A549 (cell line): ENCODE measurements at regions of chr9 and their contacts with region 1.

Region 1: GRCh38 chr9:20622330-20623020 is at the start of gene MLLT3:
- DNase-seq: peak; percentile 96
- ATAC-seq: peak; percentile 79 to 90
- H3K4me3 ChIP-seq: peak within 1 kb of the TSS; percentile 95
- H3K27ac ChIP-seq: peak within 1 kb of the TSS; percentile 90 to 96
- H3K4me1 ChIP-seq: peaks cover 24% of the 10 kb centered on the region
- CTCF ChIP-seq: no peak
- EP300 ChIP-seq: no peak
- POLR2A ChIP-seq: peak; percentile 27; the same call in 1 of the 2 replicates
- RAD21 ChIP-seq: peak in 1 of 2 experiments; percentile 1; a peak in 2 of 5 replicates
- polyA plus RNA-seq, gene MLLT3: 47.6 and 50.8 TPM in 2 replicates

Region 2: GRCh38 chr9:20256284-20256948 is 366.1 kb before region 1 on chr9:
- CTCF ChIA-PET with region 1: no interaction called
- POLR2A ChIA-PET with region 1: no interaction called
- DNase-seq: no peak
- ATAC-seq: no peak
- H3K4me3 ChIP-seq: no peak overlapping the region
- H3K27ac ChIP-seq: no peak overlapping the region
- H3K4me1 ChIP-seq: no peaks in the 10 kb centered on the region
- CTCF ChIP-seq: no peak
- EP300 ChIP-seq: no peak
- POLR2A ChIP-seq: no peak
- RAD21 ChIP-seq: no peak

Region 3: GRCh38 chr9:20280330-20280729 is 342.1 kb before region 1 on chr9:
- CTCF ChIA-PET with region 1: no interaction called
- POLR2A ChIA-PET with region 1: no interaction called
- DNase-seq: no peak
- ATAC-seq: 0 out of 6 replicates have a peak, but pooled peaks of 1 of the 2 experiments have one; percentile 24
- H3K4me3 ChIP-seq: no peak overlapping the region
- H3K27ac ChIP-seq: no peak overlapping the region
- H3K4me1 ChIP-seq: no peaks in the 10 kb centered on the region
- CTCF ChIP-seq: no peak
- EP300 ChIP-seq: no peak
- POLR2A ChIP-seq: no peak
- RAD21 ChIP-seq: no peak

Region 4: GRCh38 chr9:20312732-20313131 is 309.7 kb before region 1 on chr9:
- CTCF ChIA-PET with region 1: no interaction called
- POLR2A ChIA-PET with region 1: no interaction called
- DNase-seq: peak; percentile 23 to 24
- ATAC-seq: no peak; a peak in 1 of 6 replicates
- H3K4me3 ChIP-seq: no peak overlapping the region
- H3K27ac ChIP-seq: no peak overlapping the region
- H3K4me1 ChIP-seq: no peaks in the 10 kb centered on the region
- CTCF ChIP-seq: no peak
- EP300 ChIP-seq: no peak
- POLR2A ChIP-seq: no peak
- RAD21 ChIP-seq: no peak

Region 5: DNA sequence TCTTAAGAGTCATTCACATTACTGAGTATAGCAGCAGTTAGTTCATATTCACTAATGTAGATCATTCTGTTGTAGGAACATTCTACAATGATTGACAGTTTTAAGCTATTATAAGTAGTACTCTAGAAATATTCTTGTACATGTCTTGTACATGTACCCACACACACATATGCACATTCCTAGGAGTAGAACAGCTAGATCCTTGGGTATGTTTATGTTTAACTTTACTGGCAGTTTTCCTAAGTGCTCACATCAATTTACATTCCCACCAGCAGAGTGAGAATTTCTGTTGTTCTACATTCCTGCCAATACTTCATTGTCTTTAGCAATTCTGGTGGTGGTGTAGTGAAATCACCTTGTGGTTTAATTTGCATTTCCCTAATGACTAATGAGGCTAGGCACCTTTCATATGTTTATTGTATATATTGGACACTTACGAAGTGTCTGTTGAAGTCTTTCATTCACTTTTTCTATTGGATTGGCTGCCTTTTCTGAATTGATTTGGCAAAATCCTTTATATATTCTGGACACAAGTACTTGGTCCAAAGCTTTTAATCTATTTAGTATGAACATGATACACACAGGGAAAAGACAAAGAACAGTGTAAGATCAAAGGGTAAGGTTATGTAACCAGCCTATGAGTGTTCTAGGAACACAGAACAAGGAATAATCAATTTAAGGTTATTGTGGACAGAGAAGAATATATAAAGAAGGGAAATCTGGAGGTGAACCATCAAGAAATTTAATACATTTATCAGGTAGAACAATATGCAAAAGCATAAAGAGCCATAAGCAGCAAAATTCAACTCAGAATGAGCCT is 95.8 kb before region 1 on chr9:
- CTCF ChIA-PET with region 1: no interaction called
- POLR2A ChIA-PET with region 1: no interaction called
- DNase-seq: no peak
- ATAC-seq: peak; percentile 39 to 64; a peak in 4 of 6 replicates
- H3K4me3 ChIP-seq: no peak overlapping the region
- H3K27ac ChIP-seq: no peak overlapping the region; a peak in 1 of 6 replicates
- H3K4me1 ChIP-seq: peaks cover 14% of the 10 kb centered on the region
- CTCF ChIP-seq: no peak
- EP300 ChIP-seq: no peak
- POLR2A ChIP-seq: no peak
- RAD21 ChIP-seq: no peak

Region 6: DNA sequence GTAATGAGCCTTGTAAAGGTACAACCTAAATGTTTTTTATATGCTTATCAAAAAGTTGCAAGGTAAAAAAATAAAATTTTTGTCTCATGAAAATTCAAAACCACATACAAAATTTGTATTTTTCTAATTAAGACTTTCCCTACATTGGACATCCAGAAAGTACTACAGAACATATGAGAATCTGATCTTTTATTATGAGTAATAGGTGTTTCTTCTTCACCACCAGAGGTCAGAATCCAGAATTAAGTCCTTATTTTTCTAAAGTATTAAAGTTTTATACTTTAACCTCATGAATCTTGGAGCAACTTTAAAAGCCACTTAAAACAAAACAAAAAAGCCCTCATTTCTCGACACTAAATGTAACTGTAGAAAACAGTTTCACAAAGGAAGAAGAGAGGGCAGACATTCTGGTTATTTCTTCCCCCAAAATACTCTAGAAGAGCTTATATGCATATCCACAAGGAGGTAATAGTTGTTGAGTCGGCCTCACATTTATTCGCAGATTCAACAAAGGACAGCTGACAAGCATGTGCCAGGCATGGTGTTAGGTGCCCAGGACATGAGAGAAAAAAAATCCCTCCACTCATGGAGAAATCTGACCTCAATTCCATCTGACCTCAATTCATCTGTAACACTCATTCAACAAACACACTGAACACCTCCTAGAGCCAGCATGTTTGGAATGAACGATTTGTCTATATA is 69.5 kb before region 1 on chr9:
- CTCF ChIA-PET with region 1: interaction called, 12 read pairs
- POLR2A ChIA-PET with region 1: interaction called, 6 read pairs
- DNase-seq: peak in 1 of 2 experiments; percentile 65
- ATAC-seq: peak; percentile 57 to 61; a peak in 4 of 6 replicates
- H3K4me3 ChIP-seq: peak overlapping the region; percentile 8; the same call in 1 of the 3 replicates
- H3K27ac ChIP-seq: peak overlapping the region; percentile 69 to 74
- H3K4me1 ChIP-seq: peaks cover 67% of the 10 kb centered on the region
- CTCF ChIP-seq: peak; percentile 53
- EP300 ChIP-seq: no peak
- POLR2A ChIP-seq: no peak
- RAD21 ChIP-seq: peak; percentile 27 to 51

Region 7: GRCh38 chr9:20610591-20610990 is 11.9 kb before region 1 on chr9:
- CTCF ChIA-PET with region 1: interaction called, 13 read pairs
- POLR2A ChIA-PET with region 1: interaction called, 5 read pairs
- DNase-seq: peak in 1 of 2 experiments; percentile 27
- ATAC-seq: peak in 1 of 2 experiments; percentile 6; a peak in 1 of 6 replicates
- H3K4me3 ChIP-seq: 0 out of 3 replicates have a peak overlapping the region, but pooled peaks have one; percentile 17
- H3K27ac ChIP-seq: peak overlapping the region; percentile 71 to 75
- H3K4me1 ChIP-seq: peaks cover 83% of the 10 kb centered on the region
- CTCF ChIP-seq: no peak
- EP300 ChIP-seq: no peak
- POLR2A ChIP-seq: no peak
- RAD21 ChIP-seq: no peak

Region 8: GRCh38 chr9:20651939-20652338 is 29.5 kb after region 1 on chr9:
- CTCF ChIA-PET with region 1: interaction called, 13 read pairs
- POLR2A ChIA-PET with region 1: no interaction called
- DNase-seq: no peak
- ATAC-seq: no peak
- H3K4me3 ChIP-seq: no peak overlapping the region
- H3K27ac ChIP-seq: no peak overlapping the region
- H3K4me1 ChIP-seq: no peaks in the 10 kb centered on the region
- CTCF ChIP-seq: no peak
- EP300 ChIP-seq: no peak
- POLR2A ChIP-seq: no peak
- RAD21 ChIP-seq: no peak

Region 9: DNA sequence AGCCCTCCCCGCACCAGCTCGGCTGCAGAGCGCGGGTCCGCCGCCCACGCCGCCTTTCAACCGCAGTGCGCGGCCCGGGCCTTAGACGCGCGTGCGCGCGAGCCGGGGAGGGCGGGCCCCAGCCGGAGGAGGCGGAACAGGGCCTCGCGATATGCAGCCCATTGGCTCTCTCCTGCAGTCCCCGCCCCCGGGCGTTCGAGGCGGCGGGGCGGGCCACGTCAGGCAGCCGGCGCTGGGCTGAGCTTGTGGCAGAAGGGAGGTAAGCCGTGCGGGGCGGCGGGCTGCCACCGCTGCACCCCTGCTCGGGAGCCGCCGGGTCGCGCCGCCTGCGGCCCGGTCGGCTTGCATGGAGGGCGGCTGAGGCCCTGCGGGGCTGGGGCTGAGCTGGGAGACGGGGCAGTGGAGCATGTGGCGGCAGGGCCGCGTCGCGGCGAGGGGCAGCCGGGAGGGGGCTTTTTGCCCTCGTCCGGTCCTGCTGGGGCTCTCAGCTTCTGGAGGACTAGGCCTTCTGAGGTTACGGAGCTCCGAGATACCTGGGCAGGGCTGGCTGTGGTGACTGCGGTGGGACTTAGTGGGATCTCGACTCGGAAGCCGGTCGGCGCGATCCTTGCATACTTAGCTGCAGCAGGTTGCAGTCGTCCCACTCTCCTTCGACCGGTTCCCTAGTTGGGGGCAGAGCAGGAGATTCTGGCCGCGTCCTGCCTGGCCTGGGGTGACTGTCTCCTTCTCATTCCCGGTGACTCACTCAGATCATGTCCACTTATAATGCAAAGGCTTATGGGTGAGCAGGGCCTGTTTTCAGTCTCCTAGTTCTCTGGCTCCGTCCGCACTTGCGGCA is 61.8 kb after region 1 on chr9 and contains the start of gene FOCAD:
- CTCF ChIA-PET with region 1: interaction called, 13 read pairs
- POLR2A ChIA-PET with region 1: interaction called, 21 read pairs
- DNase-seq: peak; percentile 89 to 94
- ATAC-seq: peak; percentile 95 to 99
- H3K4me3 ChIP-seq: peak within 1 kb of the TSS; percentile 89
- H3K27ac ChIP-seq: peak within 1 kb of the TSS; percentile 93 to 97
- H3K4me1 ChIP-seq: peaks cover 22% of the 10 kb centered on the region
- CTCF ChIP-seq: no peak
- EP300 ChIP-seq: no peak
- POLR2A ChIP-seq: peak; percentile 96
- RAD21 ChIP-seq: no peak; a peak in 1 of 5 replicates
- polyA plus RNA-seq, gene FOCAD: 53.8 and 71.7 TPM in 2 replicates

Region 10: GRCh38 chr9:20941174-20941690 is 318.8 kb after region 1 on chr9:
- CTCF ChIA-PET with region 1: interaction called, 84 read pairs
- POLR2A ChIA-PET with region 1: no interaction called
- DNase-seq: peak; percentile 48 to 71
- ATAC-seq: peak; percentile 100
- H3K4me3 ChIP-seq: no peak overlapping the region
- H3K27ac ChIP-seq: no peak overlapping the region
- H3K4me1 ChIP-seq: no peaks in the 10 kb centered on the region
- CTCF ChIP-seq: peak; percentile 95
- EP300 ChIP-seq: no peak
- POLR2A ChIP-seq: no peak
- RAD21 ChIP-seq: peak; percentile 94 to 95

Region 11: DNA sequence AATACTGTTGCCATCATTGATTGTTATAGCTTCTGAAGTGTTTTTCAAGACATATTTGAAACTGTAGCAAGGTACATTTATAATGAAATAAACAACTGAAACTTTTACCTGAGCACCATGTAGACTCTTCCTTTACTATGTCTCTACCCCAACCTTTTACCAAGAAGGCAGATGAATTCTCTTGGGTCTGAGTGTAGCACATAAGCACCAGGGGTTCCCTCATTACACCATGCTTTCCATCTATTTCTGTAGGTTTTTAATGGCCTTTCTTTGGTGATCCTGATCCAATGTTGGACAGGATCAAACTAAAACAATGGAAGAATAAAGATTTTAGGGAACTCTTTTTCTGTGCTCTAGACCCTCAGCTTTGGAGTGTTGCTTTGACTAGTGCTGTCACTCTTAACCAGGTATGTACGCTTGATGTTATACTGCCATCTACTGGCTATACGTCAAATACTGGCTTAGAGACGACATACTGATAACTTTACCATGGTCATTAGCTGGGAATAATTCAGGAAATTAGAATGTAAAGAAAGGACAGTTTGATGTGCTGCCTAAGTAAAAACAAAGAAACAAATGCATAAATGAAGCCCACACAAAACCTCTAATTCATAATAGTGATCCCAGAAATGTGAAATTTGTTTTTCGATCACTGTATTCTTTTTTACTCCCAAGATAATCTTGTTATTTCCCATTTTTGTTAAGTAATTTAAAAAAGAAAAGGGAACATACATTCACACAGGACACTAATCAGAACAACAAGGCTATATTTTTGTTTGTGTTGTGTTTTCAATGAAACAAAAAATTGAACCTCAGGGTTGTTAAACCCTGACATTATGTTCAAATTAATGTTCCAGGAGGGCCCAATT is 488.5 kb after region 1 on chr9:
- CTCF ChIA-PET with region 1: interaction called, 35 read pairs
- POLR2A ChIA-PET with region 1: interaction called, 5 read pairs
- DNase-seq: peak; percentile 40 to 77
- ATAC-seq: peak; percentile 97 to 99
- H3K4me3 ChIP-seq: no peak overlapping the region
- H3K27ac ChIP-seq: no peak overlapping the region
- H3K4me1 ChIP-seq: no peaks in the 10 kb centered on the region
- CTCF ChIP-seq: peak; percentile 92
- EP300 ChIP-seq: no peak
- POLR2A ChIP-seq: no peak
- RAD21 ChIP-seq: peak; percentile 91 to 95